ENCODE measurements at regions of chr2 and their contacts with region 1.

Region 1: DNA sequence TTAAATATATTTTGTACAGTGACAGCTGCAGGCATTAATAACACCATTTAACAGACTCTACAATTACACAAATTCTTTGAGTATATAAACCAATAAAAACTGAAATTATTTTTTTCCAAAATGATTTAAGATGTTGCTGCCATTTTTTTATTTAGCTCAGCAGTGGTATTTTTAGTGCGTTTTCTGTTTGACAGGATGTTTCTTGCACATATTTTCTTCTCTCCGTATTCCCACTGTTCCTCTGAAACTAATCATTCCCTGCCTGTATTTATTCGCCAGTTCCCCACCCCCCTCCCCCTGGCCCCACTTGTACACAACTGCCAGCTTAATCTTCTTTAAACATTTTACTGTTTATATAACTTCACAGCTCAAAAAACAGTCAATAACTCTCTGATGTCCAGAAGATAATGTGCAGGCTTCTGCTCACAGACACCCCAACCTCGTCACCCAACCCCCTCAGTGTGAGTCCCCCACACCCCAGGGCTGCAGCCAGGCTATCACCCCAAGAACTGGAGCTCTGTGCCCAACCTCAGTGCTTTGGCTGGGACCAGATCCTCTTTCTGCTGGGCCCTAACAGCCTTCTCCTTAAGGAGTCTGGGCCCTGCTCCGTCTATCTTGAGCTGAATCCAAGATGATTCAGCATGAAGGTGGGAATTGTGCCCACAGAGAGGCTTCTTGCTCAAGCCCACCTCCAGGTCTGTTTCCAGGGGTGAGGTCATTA is 41.6 kb upstream of the MAP4K4 start:
- DNase-seq: peak; percentile 75
- ATAC-seq: peak; percentile 74
- H3K4me3 ChIP-seq: peak overlapping the region in 2 of 3 experiments; percentile 5 to 20; a peak in 1 of 6 replicates
- H3K27ac ChIP-seq: no peak overlapping the region
- H3K4me1 ChIP-seq: peaks cover 71% of the 10 kb centered on the region
- H3K27me3 ChIP-seq: no peaks in the 10 kb centered on the region
- CTCF ChIP-seq: no peak
- EP300 ChIP-seq: peak in 1 of 2 experiments; percentile 89; a peak in 2 of 4 replicates
- POLR2A ChIP-seq: no peak
- RAD21 ChIP-seq: no peak

Region 2: DNA sequence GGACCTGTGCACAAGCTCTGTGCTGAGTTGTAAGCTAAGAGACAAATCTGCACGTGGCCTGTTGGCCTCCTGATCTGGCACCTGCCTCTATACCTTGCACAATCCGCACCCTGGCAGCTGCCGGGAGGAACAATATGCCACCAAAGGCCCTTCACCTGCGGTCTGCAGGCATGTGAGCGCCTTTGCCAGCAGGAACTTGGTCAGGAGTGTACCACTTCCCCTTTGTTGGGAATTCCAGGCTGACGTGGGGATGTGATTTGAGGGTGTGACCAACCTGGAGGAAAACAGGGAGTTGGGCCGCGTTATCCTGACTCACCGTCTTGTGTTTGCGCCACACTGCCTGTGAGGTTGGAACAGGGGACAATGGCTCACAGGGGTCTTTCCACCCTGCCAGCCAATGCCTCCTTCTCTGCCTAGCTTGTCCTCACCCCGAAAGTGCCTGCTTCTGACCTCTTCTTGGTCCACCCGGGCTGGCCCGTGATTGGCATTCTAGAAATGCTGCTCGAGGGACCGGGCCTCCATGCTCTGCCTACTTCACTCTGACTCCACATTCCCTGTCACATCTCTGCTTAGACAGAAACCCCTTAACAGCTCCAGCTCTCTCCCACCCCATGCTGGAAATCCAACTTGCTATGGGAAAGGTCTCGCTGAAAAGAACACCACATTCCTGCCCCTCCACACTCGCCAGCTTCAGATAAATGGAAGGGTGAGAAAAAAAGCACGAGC is 25.5 kb before region 1 on chr2:
- CTCF ChIA-PET with region 1: no interaction called
- POLR2A ChIA-PET with region 1: no interaction called
- in situ Hi-C with region 1: no loop called
- intact Hi-C with region 1: loop called (anchors 1 kb)
- DNase-seq: peak; percentile 21
- ATAC-seq: no peak
- H3K4me3 ChIP-seq: no peak overlapping the region
- H3K27ac ChIP-seq: no peak overlapping the region
- H3K4me1 ChIP-seq: peaks cover 37% of the 10 kb centered on the region
- H3K27me3 ChIP-seq: no peaks in the 10 kb centered on the region
- CTCF ChIP-seq: no peak
- EP300 ChIP-seq: no peak
- POLR2A ChIP-seq: no peak
- RAD21 ChIP-seq: no peak

Region 3: GRCh38 chr2:101667823-101668222 is 12.0 kb after region 1 on chr2:
- CTCF ChIA-PET with region 1: no interaction called
- POLR2A ChIA-PET with region 1: no interaction called
- in situ Hi-C with region 1: no loop called
- intact Hi-C with region 1: no loop called
- DNase-seq: no peak
- ATAC-seq: peak; percentile 64
- H3K4me3 ChIP-seq: no peak overlapping the region
- H3K27ac ChIP-seq: no peak overlapping the region
- H3K4me1 ChIP-seq: peaks cover 21% of the 10 kb centered on the region
- H3K27me3 ChIP-seq: no peaks in the 10 kb centered on the region
- CTCF ChIP-seq: no peak
- EP300 ChIP-seq: no peak
- POLR2A ChIP-seq: no peak
- RAD21 ChIP-seq: no peak